Sigmoid colon (tissue), 7 donors: ENCODE measurements at regions of chr12 and their contacts with region 1.

Region 1: GRCh38 chr12:81644503-81644902 is 114.6 kb downstream of the PPFIA2 start:
- DNase-seq: no peak
- H3K4me3 ChIP-seq: no peak overlapping the region
- H3K27ac ChIP-seq: no peak overlapping the region
- H3K4me1 ChIP-seq: peaks cover 0 to 14% (median 0%) of the 10 kb centered on the region in 4 donors
- H3K27me3 ChIP-seq: no peaks in the 10 kb centered on the region
- CTCF ChIP-seq: peak in 2 of 4 experiments; percentile 30 to 39
- EP300 ChIP-seq: no peak
- POLR2A ChIP-seq: no peak

Region 2: GRCh38 chr12:81726634-81727033 is 82.1 kb after region 1 on chr12:
- intact Hi-C with region 1: no loop called
- DNase-seq: no peak
- H3K4me3 ChIP-seq: no peak overlapping the region
- H3K27ac ChIP-seq: no peak overlapping the region
- H3K4me1 ChIP-seq: no peaks in the 10 kb centered on the region
- H3K27me3 ChIP-seq: no peaks in the 10 kb centered on the region
- CTCF ChIP-seq: no peak
- EP300 ChIP-seq: no peak
- POLR2A ChIP-seq: no peak

Region 3: DNA sequence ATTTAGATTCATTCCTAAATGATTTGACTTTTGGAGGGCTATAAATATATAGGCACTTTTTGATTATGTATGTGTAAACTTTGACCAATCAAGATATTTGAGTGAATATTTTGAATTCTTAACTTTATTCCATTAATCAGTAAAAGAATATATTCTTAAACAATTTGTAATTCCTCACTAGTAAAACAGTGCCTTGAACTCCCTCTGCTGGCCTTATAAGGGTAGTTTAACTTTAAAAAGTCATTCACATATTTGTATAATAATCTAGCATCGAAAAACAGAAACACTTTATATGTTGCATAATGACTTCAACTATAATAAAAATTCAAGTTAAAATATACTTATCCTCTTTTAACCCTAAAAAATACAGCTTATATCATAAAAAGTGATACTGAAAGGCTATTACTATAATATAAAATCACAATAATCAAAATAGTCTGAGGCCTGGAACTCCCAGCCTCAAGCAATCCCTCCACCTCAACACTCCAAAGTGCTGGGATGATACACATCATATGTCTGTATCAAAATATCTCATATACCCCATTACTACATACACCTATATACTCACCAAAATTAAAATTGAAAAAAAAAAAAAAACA is 682.5 kb after region 1 on chr12:
- intact Hi-C with region 1: loop called (anchors 5 kb)
- DNase-seq: no peak
- H3K4me3 ChIP-seq: no peak overlapping the region
- H3K27ac ChIP-seq: no peak overlapping the region
- H3K4me1 ChIP-seq: no peaks in the 10 kb centered on the region
- H3K27me3 ChIP-seq: no peaks in the 10 kb centered on the region
- CTCF ChIP-seq: peak in 2 of 4 experiments; percentile 14 to 23
- EP300 ChIP-seq: no peak
- POLR2A ChIP-seq: no peak